Heart left ventricle (tissue), 16 donors: ENCODE measurements at regions of chr5 and their contacts with region 1.

Region 1: DNA sequence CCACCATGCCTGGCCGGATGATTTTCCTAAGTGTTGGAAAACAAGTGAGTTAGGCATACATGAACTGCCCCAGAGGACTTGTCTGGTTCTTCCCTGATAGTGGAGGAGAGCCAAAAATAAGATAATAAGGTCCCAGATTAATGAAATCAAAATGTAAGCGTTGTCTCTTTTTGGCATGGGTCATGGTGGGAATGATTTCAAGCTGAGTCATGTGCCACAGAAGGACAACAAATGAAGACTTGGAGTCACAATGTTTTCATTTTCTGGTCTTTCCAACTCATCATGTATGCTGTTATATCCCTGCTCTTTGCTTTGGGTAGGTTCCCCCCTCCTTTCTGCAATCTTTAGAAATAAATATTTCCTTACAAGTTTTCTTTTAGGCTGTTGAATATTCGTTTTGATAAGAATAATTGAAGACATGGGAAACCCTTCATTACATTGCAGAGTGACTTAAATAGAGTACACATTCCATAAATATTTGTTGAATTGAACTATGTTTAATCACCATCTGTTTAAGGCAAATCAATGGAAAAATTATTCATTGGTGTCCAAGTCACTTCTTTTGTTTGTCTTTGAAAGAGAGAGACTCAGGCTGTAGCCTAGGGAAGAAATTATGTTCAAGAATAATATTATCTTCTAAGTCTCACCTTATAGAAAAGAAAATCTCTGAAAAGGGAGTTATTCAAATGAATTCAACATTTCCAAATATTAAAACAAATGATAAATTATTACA is 196.3 kb downstream of the CSNK1G3 start:
- DNase-seq: no peak
- ATAC-seq: peak in 1 of 4 donors; percentile 50
- H3K4me3 ChIP-seq: no peak overlapping the region
- H3K27ac ChIP-seq: no peak overlapping the region
- H3K4me1 ChIP-seq: peaks cover 0 to 17% (median 5%) of the 10 kb centered on the region in 12 donors
- H3K27me3 ChIP-seq: no peaks in the 10 kb centered on the region
- CTCF ChIP-seq: no peak
- POLR2A ChIP-seq: no peak

Region 2: DNA sequence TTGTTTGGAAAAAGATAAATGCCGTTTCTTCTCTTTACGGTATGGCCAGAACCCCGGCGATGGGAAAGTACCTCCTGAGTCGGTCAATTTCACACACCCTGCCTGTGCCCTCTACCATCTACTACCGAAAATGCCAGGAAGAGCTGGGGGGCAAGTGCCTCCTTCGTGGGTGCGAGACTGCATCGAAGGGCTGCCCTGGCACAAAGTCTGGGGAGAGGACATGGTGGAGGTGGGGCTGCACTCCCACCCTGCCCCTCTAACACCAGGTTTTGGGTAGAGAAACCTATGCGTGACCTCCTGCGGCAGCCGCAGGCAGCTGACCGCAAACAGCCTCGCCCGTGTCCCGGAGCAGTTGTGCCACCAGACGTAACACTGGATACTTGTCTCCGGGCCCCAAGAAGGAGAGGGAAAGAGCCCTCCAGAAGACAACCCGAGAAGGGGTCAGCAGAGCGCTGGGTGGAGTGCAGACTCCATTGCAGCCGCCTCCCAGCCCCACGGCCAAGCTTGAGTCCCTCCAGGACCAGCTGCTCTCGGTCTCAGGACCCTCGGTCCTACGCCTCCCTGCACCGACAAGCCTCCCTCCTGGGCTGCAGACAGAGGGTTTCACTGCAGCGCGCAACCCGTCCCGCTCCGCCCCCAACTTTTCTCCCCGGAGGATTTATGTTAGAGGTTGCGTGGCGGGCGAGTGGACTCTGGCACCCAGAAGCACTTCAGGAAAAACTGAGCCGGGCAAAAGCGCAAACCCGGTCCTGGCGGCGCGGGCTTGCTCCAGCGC is 620.0 kb before region 1 on chr5:
- intact Hi-C with region 1: no loop called
- DNase-seq: peak in 2 of 5 donors; percentile 27 to 53
- ATAC-seq: peak in 2 of 4 donors; percentile 15 to 23
- H3K4me3 ChIP-seq: peak overlapping the region; percentile 10 to 70 (median 50)
- H3K27ac ChIP-seq: peak overlapping the region in 1 of 12 donors; percentile 62
- H3K4me1 ChIP-seq: peaks cover 0 to 40% (median 19%) of the 10 kb centered on the region in 12 donors
- H3K27me3 ChIP-seq: peaks cover 31 to 88% (median 58%) of the 10 kb centered on the region in 9 donors
- CTCF ChIP-seq: no peak
- POLR2A ChIP-seq: no peak

Region 3: GRCh38 chr5:123746683-123747360 is 38.6 kb after region 1 on chr5:
- intact Hi-C with region 1: loop called in 2 of 10 experiments (anchors 5 kb)
- DNase-seq: no peak
- ATAC-seq: no peak
- H3K4me3 ChIP-seq: no peak overlapping the region
- H3K27ac ChIP-seq: no peak overlapping the region
- H3K4me1 ChIP-seq: peaks cover 0 to under 1% (median 0%) of the 10 kb centered on the region in 12 donors
- H3K27me3 ChIP-seq: no peaks in the 10 kb centered on the region
- CTCF ChIP-seq: no peak
- POLR2A ChIP-seq: no peak

Region 4: GRCh38 chr5:123807177-123807945 is 99.1 kb after region 1 on chr5:
- intact Hi-C with region 1: loop called in 1 of 10 experiments (anchors 5 kb)
- DNase-seq: peak in 1 of 5 donors; percentile 24
- ATAC-seq: peak; percentile 75 to 82 (median 77)
- H3K4me3 ChIP-seq: no peak overlapping the region
- H3K27ac ChIP-seq: peak overlapping the region in 10 of 12 donors; percentile 14 to 69 (median 42)
- H3K4me1 ChIP-seq: peaks cover 6 to 48% (median 34%) of the 10 kb centered on the region in 12 donors
- H3K27me3 ChIP-seq: no peaks in the 10 kb centered on the region
- CTCF ChIP-seq: no peak
- POLR2A ChIP-seq: no peak